Body of pancreas (tissue), 4 donors: ENCODE measurements at regions of chr9 and their contacts with region 1.

Region 1: GRCh38 chr9:101311758-101312420 is 72.9 kb downstream of the BAAT start:
- DNase-seq: peak in 2 of 4 donors; percentile 25 to 54
- ATAC-seq: peak; percentile 85
- H3K4me3 ChIP-seq: no peak overlapping the region
- H3K27ac ChIP-seq: no peak overlapping the region
- H3K4me1 ChIP-seq: peaks cover 14% of the 10 kb centered on the region
- H3K27me3 ChIP-seq: no peaks in the 10 kb centered on the region
- CTCF ChIP-seq: peak; percentile 49 to 84 (median 73)
- POLR2A ChIP-seq: no peak

Region 2: DNA sequence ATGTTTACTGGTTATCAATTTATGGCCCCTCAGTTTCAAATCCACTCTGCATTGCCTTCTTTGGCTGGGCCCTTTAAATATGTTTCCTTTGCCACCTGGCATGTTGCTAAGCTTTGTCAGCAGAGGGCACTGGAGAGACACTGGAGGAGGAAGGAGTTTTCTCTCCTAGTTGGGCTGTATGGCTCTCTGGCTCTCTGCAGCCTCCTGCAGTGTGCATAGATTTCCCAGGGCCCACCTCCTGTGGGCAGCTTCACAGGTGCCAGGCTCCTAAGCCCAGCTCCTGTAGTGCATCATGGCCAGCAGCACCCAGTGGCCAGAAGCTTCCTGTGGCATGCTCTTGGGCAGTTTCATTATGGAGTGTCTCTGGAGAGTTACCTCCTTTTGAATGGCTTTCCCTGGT is 710.7 kb before region 1 on chr9:
- intact Hi-C with region 1: loop called (anchors 10 kb)
- DNase-seq: peak; percentile 44 to 62 (median 54)
- ATAC-seq: peak; percentile 36
- H3K4me3 ChIP-seq: no peak overlapping the region
- H3K27ac ChIP-seq: no peak overlapping the region
- H3K4me1 ChIP-seq: peaks cover 11% of the 10 kb centered on the region
- H3K27me3 ChIP-seq: no peaks in the 10 kb centered on the region
- CTCF ChIP-seq: peak; percentile 5 to 57 (median 48)
- POLR2A ChIP-seq: no peak

Region 3: DNA sequence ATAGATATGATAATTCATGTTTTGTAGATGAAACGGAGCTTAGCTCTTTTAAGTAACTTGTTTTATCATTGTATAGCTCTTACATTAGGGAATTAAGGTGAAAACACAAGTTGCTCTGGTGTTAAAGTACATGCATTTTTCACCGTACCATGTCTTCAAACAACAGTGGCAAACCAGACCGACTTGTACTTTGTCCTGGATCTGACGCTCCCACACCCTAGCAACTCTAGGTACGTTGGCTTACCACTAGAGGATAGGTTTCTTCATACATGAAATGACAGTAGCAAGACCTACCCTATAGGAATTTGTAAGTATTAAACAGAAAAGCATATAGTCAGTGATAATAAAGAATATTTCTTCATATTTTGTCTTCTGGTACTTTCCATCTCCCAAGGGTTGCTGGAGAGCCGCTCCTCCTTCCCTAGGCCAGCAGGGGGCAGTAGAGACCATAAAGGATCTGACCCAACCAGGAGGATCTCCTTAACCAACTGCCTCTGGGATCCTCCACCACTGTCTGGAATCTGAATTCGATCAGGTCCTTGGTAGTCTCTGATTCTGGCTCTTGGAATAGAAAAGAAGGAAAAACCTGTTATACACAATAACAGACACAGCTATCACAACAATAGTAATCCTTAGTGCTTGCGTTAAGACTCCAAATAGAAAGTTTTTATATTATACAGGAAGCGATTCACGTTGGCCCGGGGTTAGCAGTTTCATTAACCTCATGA is 597.4 kb before region 1 on chr9:
- intact Hi-C with region 1: loop called (anchors 5 kb)
- DNase-seq: peak; percentile 65 to 71 (median 69)
- ATAC-seq: peak; percentile 69
- H3K4me3 ChIP-seq: no peak overlapping the region
- H3K27ac ChIP-seq: no peak overlapping the region
- H3K4me1 ChIP-seq: no peaks in the 10 kb centered on the region
- H3K27me3 ChIP-seq: no peaks in the 10 kb centered on the region
- CTCF ChIP-seq: peak; percentile 65 to 91 (median 73)
- POLR2A ChIP-seq: no peak

Region 4: GRCh38 chr9:101119206-101119819 is 192.6 kb before region 1 on chr9:
- intact Hi-C with region 1: loop called (anchors 10 kb)
- DNase-seq: peak; percentile 68 to 79 (median 70)
- ATAC-seq: peak; percentile 82
- H3K4me3 ChIP-seq: no peak overlapping the region
- H3K27ac ChIP-seq: no peak overlapping the region
- H3K4me1 ChIP-seq: no peaks in the 10 kb centered on the region
- H3K27me3 ChIP-seq: no peaks in the 10 kb centered on the region
- CTCF ChIP-seq: peak; percentile 70 to 84 (median 81)
- POLR2A ChIP-seq: no peak